ENCODE measurements at regions of chr17 and their contacts with region 1.

Region 1: DNA sequence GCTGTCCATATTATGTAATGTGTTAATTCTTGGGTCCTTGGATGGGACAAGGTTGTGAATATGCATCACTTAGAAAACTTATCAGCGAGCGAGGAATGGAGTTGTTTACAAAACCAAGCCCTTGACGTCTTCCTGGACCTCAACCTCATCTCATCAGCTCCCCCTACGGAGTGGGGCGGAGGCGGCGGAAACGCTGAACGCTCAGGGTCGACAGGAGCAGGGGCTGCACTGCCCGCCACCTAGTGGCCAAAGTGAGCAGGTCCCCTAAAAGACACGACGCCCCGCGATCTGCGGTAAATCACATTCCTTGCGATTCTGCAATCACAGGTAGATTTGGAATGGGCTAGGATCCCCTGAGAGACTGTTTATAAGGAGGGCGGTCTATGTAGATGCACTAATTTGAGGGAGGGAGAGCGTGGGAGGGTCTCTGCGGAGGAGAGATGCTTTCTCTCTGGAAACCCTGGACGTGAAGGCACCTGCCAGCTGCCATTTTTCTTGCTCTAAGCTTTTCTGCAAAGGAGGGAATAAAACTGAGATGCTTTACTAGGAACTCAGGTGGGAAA is 5.4 kb upstream of the ICAM2 start:
- DNase-seq: peak; percentile 77 to 92 (median 82)
- ATAC-seq: peak; percentile 56 to 87 (median 82)
- H3K4me3 ChIP-seq: peak overlapping the region in 7 of 12 donors; percentile 0 to 37 (median 16)
- H3K27ac ChIP-seq: peak overlapping the region in 8 of 12 donors; percentile 3 to 77 (median 54)
- H3K4me1 ChIP-seq: peaks cover 0 to 33% (median 7%) of the 10 kb centered on the region in 12 donors
- H3K27me3 ChIP-seq: no peaks in the 10 kb centered on the region
- CTCF ChIP-seq: peak; percentile 90 to 99 (median 94)
- POLR2A ChIP-seq: no peak

Region 2: GRCh38 chr17:63911657-63912426 is 114.0 kb before region 1 on chr17:
- intact Hi-C with region 1: loop called in 6 of 10 experiments (anchors 5 kb)
- DNase-seq: peak in 1 of 5 donors; percentile 34
- ATAC-seq: peak; percentile 38 to 67 (median 62)
- H3K4me3 ChIP-seq: no peak overlapping the region
- H3K27ac ChIP-seq: no peak overlapping the region
- H3K4me1 ChIP-seq: no peaks in the 10 kb centered on the region
- H3K27me3 ChIP-seq: peaks cover 0 to 11% (median 0%) of the 10 kb centered on the region in 9 donors
- CTCF ChIP-seq: peak; percentile 77 to 91 (median 81)
- POLR2A ChIP-seq: no peak

Region 3: DNA sequence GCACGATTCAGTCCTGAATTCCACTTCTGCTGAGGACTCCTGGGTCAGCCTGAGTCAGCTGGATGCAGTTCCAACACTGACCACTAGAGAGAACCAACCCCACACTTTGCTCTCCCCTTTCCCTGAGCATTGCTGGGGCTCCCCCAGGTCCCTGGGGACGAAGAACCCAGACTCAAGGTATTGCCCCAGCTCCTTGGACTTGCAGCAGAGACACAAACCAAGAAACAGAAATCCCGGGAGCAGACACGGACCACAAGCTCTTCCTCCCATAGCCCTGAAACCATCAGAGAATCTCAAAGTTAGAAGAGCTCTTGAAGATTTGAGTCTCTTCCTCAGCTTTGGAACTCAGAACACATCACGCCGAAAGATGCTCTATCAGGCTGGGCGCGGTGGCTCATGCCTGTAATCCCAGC is 106.5 kb before region 1 on chr17:
- intact Hi-C with region 1: loop called (anchors 2 to 5 kb)
- DNase-seq: peak in 4 of 5 donors; percentile 49 to 58 (median 54)
- ATAC-seq: peak; percentile 59 to 86 (median 86)
- H3K4me3 ChIP-seq: no peak overlapping the region
- H3K27ac ChIP-seq: no peak overlapping the region
- H3K4me1 ChIP-seq: peaks cover 0 to 7% (median 0%) of the 10 kb centered on the region in 12 donors
- H3K27me3 ChIP-seq: no peaks in the 10 kb centered on the region
- CTCF ChIP-seq: peak; percentile 85 to 97 (median 91)
- POLR2A ChIP-seq: no peak

Region 4: GRCh38 chr17:63946440-63947367 is 79.1 kb before region 1 on chr17:
- intact Hi-C with region 1: no loop called
- DNase-seq: peak in 3 of 5 donors; percentile 42 to 54 (median 46)
- ATAC-seq: peak in 3 of 4 donors; percentile 68 to 83 (median 79)
- H3K4me3 ChIP-seq: no peak overlapping the region
- H3K27ac ChIP-seq: no peak overlapping the region
- H3K4me1 ChIP-seq: peaks cover 0 to 15% (median 0%) of the 10 kb centered on the region in 12 donors
- H3K27me3 ChIP-seq: no peaks in the 10 kb centered on the region
- CTCF ChIP-seq: peak; percentile 75 to 85 (median 81)
- POLR2A ChIP-seq: no peak

Region 5: DNA sequence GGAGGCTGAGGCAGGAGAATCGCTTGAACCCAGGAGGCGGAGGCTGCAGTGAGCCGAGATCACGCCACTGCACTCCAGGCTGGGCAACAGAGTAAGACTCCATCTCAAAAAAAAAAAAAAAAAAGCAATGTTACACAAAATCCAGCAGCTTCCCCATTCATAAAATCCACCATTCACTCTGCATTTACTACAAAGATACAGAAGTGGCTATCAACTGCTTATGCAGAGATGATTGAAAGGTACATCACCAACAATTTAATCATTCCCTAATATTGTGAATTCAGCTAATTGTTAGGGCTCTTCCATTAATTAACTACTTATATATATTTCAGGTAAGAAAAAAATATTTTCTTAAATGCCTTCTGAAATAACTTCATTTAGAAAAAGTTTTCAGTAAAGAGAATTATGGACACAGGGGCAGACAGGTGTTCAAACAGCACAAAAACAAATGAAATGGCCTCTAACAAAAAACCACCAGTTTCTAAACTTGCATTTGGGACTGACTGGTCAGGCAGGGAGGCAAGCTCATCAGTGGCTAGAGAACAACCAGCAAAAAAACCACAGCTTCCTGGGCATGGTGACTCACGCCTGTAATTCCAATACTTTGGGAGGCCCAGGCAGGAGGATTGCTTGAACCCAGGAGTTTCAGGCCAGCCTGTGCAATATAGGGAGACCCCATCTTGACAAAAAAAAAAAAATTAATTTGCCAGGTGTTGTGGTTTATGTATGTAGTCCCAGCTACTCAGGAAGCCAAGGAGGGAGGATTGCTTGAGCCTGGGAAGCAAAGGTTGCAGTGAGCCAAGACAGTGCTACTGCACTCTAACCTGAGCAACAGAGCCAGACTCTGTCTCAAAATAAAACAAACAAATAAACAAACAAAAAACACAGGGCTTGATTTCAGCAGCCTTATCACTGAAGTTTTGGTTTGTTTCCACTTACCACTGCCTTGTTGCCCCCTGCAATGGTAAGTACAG is 77.9 kb after region 1 on chr17:
- intact Hi-C with region 1: no loop called
- DNase-seq: no peak
- ATAC-seq: no peak
- H3K4me3 ChIP-seq: no peak overlapping the region
- H3K27ac ChIP-seq: no peak overlapping the region
- H3K4me1 ChIP-seq: peaks cover 0 to 22% (median 2%) of the 10 kb centered on the region in 12 donors
- H3K27me3 ChIP-seq: no peaks in the 10 kb centered on the region
- CTCF ChIP-seq: no peak
- POLR2A ChIP-seq: no peak

Measured in heart left ventricle (tissue), 16 donors.